Body of pancreas (tissue), 4 donors: ENCODE measurements at regions of chr11 and their contacts with region 1.

Region 1: GRCh38 chr11:9534791-9535781 is 38.4 kb upstream of the WEE1 start:
- DNase-seq: peak; percentile 73 to 86 (median 82)
- ATAC-seq: peak; percentile 80
- H3K4me3 ChIP-seq: no peak overlapping the region
- H3K27ac ChIP-seq: no peak overlapping the region
- H3K4me1 ChIP-seq: no peaks in the 10 kb centered on the region
- H3K27me3 ChIP-seq: no peaks in the 10 kb centered on the region
- CTCF ChIP-seq: peak; percentile 62 to 80 (median 77)
- POLR2A ChIP-seq: no peak

Region 2: DNA sequence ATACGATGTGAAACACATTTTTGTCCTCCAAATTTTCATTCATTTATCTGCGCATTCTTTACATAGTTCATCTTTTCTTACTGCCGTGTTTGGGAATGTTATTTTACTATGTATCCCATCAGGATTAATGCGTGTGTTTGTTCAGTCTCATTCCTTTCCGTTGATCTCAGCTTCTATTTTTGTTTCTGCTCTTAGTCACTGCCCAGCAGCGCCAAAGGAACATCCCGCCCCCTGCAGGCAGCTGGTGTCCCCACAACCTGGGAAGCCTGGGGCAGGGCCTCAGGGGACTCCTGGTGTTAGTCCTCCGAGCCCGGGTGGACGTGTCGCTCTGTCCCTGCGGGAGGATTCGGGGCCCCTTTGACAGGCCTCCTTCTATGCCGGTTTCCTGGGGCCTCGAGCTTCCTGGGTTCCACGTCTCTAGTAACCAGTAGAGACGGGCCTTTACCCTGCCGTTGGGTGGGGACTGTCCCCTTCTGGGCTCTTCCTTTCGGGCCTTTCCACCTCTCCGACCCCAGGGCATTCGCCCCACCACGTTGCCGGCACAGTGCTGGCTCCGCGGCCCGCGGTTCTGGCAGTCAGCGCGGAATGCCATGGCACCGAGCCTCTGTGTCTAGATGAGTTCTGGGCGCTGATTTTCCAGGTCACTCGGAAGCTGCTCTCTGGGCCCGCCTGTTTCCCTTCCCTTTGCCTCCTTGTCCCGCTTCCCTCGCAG is 78.2 kb after region 1 on chr11:
- intact Hi-C with region 1: loop called (anchors 10 kb)
- DNase-seq: peak; percentile 95 to 96 (median 96)
- ATAC-seq: peak; percentile 90
- H3K4me3 ChIP-seq: no peak overlapping the region
- H3K27ac ChIP-seq: peak overlapping the region; percentile 95 to 98 (median 96)
- H3K4me1 ChIP-seq: peaks cover 25% of the 10 kb centered on the region
- H3K27me3 ChIP-seq: no peaks in the 10 kb centered on the region
- CTCF ChIP-seq: peak; percentile 82 to 98 (median 97)
- POLR2A ChIP-seq: peak; percentile 82 to 91 (median 83)